GM10248 (cell line): ENCODE measurements at regions of chr1 and their contacts with region 1.

Region 1: DNA sequence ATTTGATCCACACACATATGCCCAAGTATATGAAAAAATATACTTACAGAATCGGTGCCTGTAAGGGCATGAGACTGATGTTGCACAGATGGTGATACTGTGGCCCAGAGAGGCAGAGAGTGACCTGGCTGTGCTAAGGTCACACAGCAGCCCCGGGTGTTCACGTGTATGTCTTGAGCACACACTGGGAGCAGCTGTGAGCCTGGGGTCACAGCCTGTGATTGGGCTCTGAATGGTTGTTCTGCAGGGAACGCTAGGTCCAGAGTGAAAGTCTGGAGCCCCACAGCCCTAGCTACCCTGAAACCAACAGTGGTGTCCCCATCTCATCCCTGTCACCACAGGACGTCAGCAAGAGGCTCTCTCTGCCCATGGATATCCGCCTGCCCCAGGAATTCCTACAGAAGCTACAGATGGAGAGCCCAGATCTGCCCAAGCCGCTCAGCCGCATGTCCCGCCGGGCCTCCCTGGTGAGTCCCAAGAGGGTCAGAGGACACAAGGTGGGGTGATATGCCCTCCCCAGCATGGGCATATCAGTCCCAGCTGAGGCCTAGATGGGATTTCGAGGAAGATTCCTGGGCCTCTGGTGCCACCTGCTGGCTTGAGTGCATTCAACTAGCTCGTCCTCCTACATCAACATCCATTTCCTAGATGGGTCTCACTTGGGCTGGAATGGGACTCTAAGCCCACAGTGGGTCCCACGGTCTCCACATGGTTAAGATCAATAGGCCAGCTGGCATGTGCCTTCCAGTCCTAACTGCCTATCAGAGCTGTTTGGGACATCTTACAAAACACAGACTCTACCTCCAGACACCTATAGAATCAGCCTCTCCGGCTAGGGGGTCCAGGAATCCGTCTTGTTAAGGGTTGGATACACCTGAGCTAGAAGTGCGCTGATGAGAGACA is 19.7 kb downstream of the CDK18 start:
- DNase-seq: peak; percentile 78
- CTCF ChIP-seq: peak; percentile 77

Region 2: DNA sequence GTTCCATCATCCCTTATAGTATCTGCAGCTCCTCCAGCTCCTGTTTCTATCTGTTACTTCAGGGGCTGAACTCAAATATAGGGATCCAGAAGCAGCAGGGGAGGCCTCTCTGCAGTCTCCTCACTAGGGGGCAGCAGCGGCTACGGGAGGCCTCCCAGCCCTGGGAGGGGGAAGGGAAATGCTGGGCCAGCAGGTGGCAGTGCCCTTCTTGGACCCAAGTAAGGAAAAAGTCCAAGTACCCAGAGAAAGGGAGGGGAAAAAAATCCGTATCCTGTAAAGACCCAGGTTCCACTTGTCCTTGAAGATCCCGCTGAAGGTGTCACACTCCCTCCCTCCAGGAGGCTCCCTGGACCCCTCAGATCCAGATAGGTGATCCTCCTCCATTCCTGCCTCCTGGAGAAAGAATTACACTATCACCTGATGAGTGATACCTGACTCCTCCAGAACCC is 188.5 kb before region 1 on chr1:
- CTCF ChIA-PET with region 1: interaction called, 46 read pairs
- POLR2A ChIA-PET with region 1: no interaction called
- DNase-seq: peak; percentile 78
- CTCF ChIP-seq: peak; percentile 96

Region 3: GRCh38 chr1:205396967-205397616 is 127.0 kb before region 1 on chr1:
- CTCF ChIA-PET with region 1: interaction called, 35 read pairs
- POLR2A ChIA-PET with region 1: no interaction called
- DNase-seq: peak; percentile 40
- CTCF ChIP-seq: peak; percentile 60

Region 4: GRCh38 chr1:205512059-205513045 is 11.8 kb before region 1 on chr1:
- CTCF ChIA-PET with region 1: interaction called, 38 read pairs
- POLR2A ChIA-PET with region 1: no interaction called
- DNase-seq: no peak
- CTCF ChIP-seq: no peak

Region 5: DNA sequence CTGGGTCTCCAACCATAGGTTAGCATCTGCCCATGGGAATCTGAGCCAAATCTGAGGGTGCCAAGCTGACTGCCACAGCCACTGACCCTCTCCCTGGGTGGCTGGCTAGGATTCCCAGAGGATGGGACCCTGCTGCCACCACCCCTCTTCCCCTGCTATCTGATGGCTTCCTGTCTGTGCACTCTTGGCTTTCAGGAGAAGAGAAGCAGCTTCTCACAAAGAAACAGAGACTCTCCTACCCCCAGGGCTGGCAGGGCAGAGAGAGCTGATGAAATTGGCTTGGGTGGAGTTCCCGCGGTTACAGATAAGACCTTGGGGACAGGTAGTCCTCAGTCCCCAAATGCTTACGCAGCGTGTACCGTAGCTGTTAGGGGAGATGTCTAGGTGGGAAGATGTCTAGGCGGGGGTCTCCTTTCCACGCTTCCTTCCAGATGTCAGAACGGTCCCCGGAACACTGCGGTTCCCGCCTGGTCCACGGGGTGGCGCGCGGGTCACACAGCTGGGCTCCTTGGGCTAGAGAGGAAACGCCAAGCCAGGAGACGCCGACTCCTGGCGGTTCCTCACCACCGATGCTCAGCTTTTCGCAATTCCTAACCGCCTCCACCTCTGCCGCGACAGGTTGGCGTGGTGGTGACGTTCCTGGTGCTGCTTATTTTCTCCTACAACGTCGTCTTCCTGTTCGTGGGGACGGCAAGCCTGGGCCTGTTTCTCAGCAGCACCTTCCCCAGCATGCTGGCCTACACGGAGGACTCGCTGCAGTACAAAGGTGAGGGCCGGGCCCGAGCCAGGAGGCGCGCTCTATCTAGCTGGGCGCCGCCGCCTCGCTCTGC is 67.6 kb after region 1 on chr1:
- CTCF ChIA-PET with region 1: interaction called, 13 read pairs
- POLR2A ChIA-PET with region 1: interaction called, 3 read pairs
- DNase-seq: peak; percentile 83
- CTCF ChIP-seq: peak; percentile 98